Activated CD4-positive, alpha-beta memory T cell treated with anti-CD3 and anti-CD28 coated beads, Interleukin-2, amount 10 ng/mL, durations not matched to agents 7 days and 5 days (primary cell): ENCODE measurements at regions of chr5 and their contacts with region 1.

Region 1: DNA sequence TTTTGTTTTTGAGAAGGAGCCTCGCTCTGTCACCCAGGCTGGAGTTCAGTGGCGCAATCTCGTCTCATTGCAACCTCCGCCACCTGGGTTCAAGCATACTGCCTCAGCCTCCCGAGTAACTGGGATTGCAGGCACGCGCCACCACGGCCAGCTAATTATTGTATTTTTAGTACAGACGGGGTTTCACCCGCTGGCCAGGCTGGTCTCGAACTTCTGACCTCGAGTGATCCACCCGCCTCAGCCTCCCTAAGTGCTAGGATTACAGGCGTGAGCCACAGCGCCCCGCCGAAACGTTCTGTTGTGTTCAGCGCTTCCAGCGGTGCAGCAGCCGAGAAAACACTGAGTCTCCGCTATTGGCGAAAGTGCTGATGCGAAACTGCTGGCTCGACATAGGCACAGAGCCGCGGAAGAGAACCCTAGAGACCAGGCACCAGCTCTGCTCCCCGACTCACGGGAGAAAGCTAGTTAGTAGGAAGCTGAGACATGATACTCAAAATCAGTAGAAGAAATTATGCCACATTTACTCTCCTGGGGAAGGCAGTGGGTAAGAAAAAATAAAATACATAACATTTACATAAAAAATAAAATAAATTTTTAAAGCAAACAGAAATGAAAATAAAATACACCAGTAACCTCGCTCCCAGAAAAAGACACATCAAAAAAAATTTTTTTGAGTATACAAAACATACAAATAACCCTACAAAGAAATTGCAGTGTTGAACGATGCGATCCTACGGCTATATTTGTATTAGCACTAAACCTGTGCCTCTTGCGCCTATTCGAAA is 31.6 kb downstream of the ANXA2R start:
- DNase-seq: peak; percentile 93
- H3K4me3 Mint-ChIP-seq: peak overlapping the region; percentile 89
- H3K27ac Mint-ChIP-seq: peak overlapping the region; percentile 97
- H3K4me1 Mint-ChIP-seq: peaks cover 39% of the 10 kb centered on the region
- H3K27me3 Mint-ChIP-seq: peaks cover 5% of the 10 kb centered on the region

Region 2: GRCh38 chr5:42940853-42941252 is 67.7 kb before region 1 on chr5:
- CTCF ChIA-PET with region 1: no interaction called
- POLR2A ChIA-PET with region 1: no interaction called
- DNase-seq: no peak
- H3K4me3 Mint-ChIP-seq: no peak overlapping the region
- H3K27ac Mint-ChIP-seq: no peak overlapping the region
- H3K4me1 Mint-ChIP-seq: peaks cover 2% of the 10 kb centered on the region
- H3K27me3 Mint-ChIP-seq: peaks cover 3% of the 10 kb centered on the region

Region 3: DNA sequence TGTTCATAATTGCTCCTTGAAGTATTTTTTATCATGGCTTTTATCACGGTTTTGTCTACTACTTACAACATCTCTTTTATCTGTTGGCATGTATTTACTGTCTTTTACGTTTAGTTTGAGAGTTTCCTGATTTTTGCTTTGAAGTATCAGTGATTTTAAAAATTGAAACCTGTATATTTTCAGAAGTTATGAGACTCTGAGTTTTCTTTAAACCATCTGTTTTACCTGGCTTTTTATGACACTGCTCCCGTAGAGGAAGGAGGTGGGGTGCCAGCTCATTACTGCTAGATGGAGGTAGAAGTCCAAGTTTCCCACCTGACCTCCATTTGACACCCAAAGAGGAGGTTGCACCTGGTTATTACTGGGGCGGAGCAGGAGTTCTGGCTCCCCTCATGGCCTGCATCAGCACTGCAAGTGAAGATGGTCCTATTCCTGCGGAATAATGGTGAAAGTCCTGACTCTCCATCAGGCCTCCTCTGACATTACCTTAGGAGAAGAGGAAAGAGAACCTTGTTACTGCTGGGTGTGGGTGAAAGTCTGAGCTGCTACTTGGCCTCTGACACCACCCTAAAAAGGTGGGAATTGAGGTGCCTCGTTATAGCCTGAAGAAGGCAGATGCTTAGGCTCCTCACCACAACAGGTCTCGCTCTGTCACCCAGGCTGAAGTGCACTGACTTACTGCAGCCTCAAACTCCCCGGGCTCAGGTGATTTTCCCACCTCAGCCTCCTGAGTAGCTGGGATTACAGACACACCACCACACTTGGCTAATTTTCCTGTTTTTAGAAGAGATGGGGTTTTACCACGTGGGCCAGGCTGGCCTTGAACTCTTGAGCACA is 102.3 kb after region 1 on chr5:
- CTCF ChIA-PET with region 1: interaction called, 3 read pairs
- POLR2A ChIA-PET with region 1: interaction called, 10 read pairs
- DNase-seq: no peak
- H3K4me3 Mint-ChIP-seq: no peak overlapping the region
- H3K27ac Mint-ChIP-seq: peak overlapping the region; percentile 40
- H3K4me1 Mint-ChIP-seq: peaks cover 30% of the 10 kb centered on the region
- H3K27me3 Mint-ChIP-seq: no peaks in the 10 kb centered on the region